MCF 10A (cell line): ENCODE measurements at regions of chr13 and their contacts with region 1.

Region 1: GRCh38 chr13:89695343-89696257 is 1651.9 kb upstream of the MIR17HG start:
- DNase-seq: peak; percentile 66
- H3K4me3 Mint-ChIP-seq: no peak overlapping the region
- H3K27ac Mint-ChIP-seq: no peak overlapping the region
- H3K4me1 Mint-ChIP-seq: no peaks in the 10 kb centered on the region
- H3K27me3 Mint-ChIP-seq: no peaks in the 10 kb centered on the region
- CTCF ChIP-seq: peak; percentile 70

Region 2: GRCh38 chr13:88979465-88980175 is 716.0 kb before region 1 on chr13:
- CTCF ChIA-PET with region 1: interaction called, 8 read pairs
- POLR2A ChIA-PET with region 1: no interaction called
- intact Hi-C with region 1: loop called (anchors 10 kb)
- DNase-seq: peak; percentile 29
- H3K4me3 Mint-ChIP-seq: no peak overlapping the region
- H3K27ac Mint-ChIP-seq: no peak overlapping the region
- H3K4me1 Mint-ChIP-seq: no peaks in the 10 kb centered on the region
- H3K27me3 Mint-ChIP-seq: no peaks in the 10 kb centered on the region
- CTCF ChIP-seq: peak; percentile 23

Region 3: GRCh38 chr13:89066868-89067466 is 628.6 kb before region 1 on chr13:
- CTCF ChIA-PET with region 1: interaction called, 6 read pairs
- POLR2A ChIA-PET with region 1: no interaction called
- intact Hi-C with region 1: loop called (anchors 5 kb)
- DNase-seq: peak; percentile 79
- H3K4me3 Mint-ChIP-seq: no peak overlapping the region
- H3K27ac Mint-ChIP-seq: no peak overlapping the region
- H3K4me1 Mint-ChIP-seq: peaks cover 6% of the 10 kb centered on the region
- H3K27me3 Mint-ChIP-seq: no peaks in the 10 kb centered on the region
- CTCF ChIP-seq: peak; percentile 60

Region 4: GRCh38 chr13:89361909-89362308 is 333.7 kb before region 1 on chr13:
- CTCF ChIA-PET with region 1: interaction called, 4 read pairs
- POLR2A ChIA-PET with region 1: no interaction called
- intact Hi-C with region 1: loop called (anchors 5 kb)
- DNase-seq: peak; percentile 8
- H3K4me3 Mint-ChIP-seq: no peak overlapping the region
- H3K27ac Mint-ChIP-seq: no peak overlapping the region
- H3K4me1 Mint-ChIP-seq: no peaks in the 10 kb centered on the region
- H3K27me3 Mint-ChIP-seq: no peaks in the 10 kb centered on the region
- CTCF ChIP-seq: no peak

Region 5: GRCh38 chr13:89432997-89433396 is 262.6 kb before region 1 on chr13:
- CTCF ChIA-PET with region 1: interaction called, 22 read pairs
- POLR2A ChIA-PET with region 1: no interaction called
- intact Hi-C with region 1: loop called (anchors 2 kb)
- DNase-seq: no peak
- H3K4me3 Mint-ChIP-seq: no peak overlapping the region
- H3K27ac Mint-ChIP-seq: no peak overlapping the region
- H3K4me1 Mint-ChIP-seq: no peaks in the 10 kb centered on the region
- H3K27me3 Mint-ChIP-seq: no peaks in the 10 kb centered on the region
- CTCF ChIP-seq: no peak

Region 6: DNA sequence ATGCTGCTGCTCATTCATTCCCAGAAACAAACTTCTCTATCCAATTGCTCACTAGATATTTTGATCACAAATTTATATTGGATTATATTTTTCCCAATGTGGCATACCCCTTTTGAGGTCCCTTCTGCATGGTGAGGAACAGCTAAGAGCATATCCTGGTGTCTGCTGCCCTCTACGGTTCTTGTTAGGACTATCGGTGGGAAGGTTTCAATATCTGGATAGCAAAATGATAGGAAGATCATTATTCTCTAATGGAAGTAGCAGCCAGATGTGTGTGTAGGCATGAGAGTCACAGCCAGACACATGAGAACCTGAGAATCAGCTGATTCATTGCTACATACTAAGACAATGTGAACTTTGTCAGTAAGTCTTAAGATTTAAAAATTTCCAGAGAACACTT is 229.5 kb after region 1 on chr13:
- CTCF ChIA-PET with region 1: interaction called, 3 read pairs
- POLR2A ChIA-PET with region 1: no interaction called
- intact Hi-C with region 1: loop called (anchors 5 kb)
- DNase-seq: peak; percentile 61
- H3K4me3 Mint-ChIP-seq: no peak overlapping the region
- H3K27ac Mint-ChIP-seq: no peak overlapping the region
- H3K4me1 Mint-ChIP-seq: peaks cover 8% of the 10 kb centered on the region
- H3K27me3 Mint-ChIP-seq: no peaks in the 10 kb centered on the region
- CTCF ChIP-seq: peak; percentile 44